Stomach (tissue), 19 donors: ENCODE measurements at regions of chr11 and their contacts with region 1.

Region 1: DNA sequence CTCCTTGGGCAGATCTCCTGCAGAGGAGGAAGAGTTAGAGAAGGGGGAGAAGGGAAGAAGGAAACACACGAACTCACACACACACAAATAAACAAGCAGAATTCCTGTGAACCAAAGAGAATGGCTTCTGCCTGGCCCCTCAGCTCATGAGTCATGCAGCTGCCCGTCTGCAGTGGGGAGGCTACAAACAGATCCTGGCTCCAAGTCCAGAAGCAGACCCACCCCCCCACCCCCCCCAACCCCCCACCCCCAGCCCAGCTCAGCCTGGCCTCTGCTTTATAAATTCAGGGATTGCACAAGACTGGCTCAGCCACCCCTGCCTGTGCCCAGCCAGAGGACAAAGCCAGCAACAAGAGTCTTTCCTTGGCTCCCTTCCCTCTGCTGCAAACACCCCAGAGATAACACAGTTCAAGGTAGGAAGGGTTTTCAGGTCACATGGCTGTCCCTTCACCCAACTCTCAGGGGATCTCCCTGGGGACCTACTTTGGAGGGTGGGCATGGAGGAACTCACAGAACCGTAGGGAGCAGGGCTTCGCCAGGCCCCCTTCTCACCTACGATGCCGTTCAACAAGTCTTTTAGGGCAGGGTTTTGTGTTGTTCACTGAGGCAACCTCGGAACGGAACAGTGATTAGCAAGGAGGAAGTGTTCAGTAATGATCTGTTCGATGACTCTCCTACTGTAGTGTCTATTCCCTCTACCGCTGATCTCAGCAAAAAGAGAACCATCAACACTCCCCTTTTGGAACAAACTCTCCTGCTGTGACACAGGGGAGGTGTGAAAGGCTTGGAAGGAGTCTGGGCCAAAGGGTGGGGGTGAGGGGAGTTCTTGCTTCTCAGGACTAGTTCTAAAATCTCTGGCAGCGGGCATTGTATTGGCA is 35.5 kb downstream of the RPL27A start:
- DNase-seq: peak; percentile 70 to 75
- H3K4me3 ChIP-seq: no peak overlapping the region
- H3K27ac ChIP-seq: peak overlapping the region; percentile 87 to 94 (median 89)
- H3K4me1 ChIP-seq: peaks cover 80 to 99% (median 88%) of the 10 kb centered on the region in 4 donors
- H3K27me3 ChIP-seq: no peaks in the 10 kb centered on the region
- CTCF ChIP-seq: no peak
- EP300 ChIP-seq: no peak
- POLR2A ChIP-seq: no peak

Region 2: GRCh38 chr11:8807544-8808225 is 89.6 kb after region 1 on chr11:
- intact Hi-C with region 1: loop called (anchors 10 kb)
- DNase-seq: peak; percentile 46 to 74
- H3K4me3 ChIP-seq: peak overlapping the region; percentile 59 to 66 (median 60)
- H3K27ac ChIP-seq: peak overlapping the region; percentile 81 to 98 (median 92)
- H3K4me1 ChIP-seq: peaks cover 56 to 91% (median 73%) of the 10 kb centered on the region in 4 donors
- H3K27me3 ChIP-seq: no peaks in the 10 kb centered on the region
- CTCF ChIP-seq: no peak
- EP300 ChIP-seq: no peak
- POLR2A ChIP-seq: no peak